ENCODE measurements at regions of chr1 and their contacts with region 1.

Region 1: GRCh38 chr1:39646232-39647081 is 7.0 kb upstream of the HEYL start:
- DNase-seq: peak; percentile 55
- H3K4me3 ChIP-seq: no peak overlapping the region
- H3K27me3 ChIP-seq: peaks cover 2% of the 10 kb centered on the region; the same call in 1 of the 2 replicates
- CTCF ChIP-seq: peak; percentile 23; the same call in 1 of the 2 replicates

Region 2: GRCh38 chr1:39044762-39045161 is 601.7 kb before region 1 on chr1:
- CTCF ChIA-PET with region 1: no interaction called
- POLR2A ChIA-PET with region 1: no interaction called
- DNase-seq: no peak
- H3K4me3 ChIP-seq: no peak overlapping the region
- H3K27me3 ChIP-seq: no peaks in the 10 kb centered on the region
- CTCF ChIP-seq: no peak

Region 3: DNA sequence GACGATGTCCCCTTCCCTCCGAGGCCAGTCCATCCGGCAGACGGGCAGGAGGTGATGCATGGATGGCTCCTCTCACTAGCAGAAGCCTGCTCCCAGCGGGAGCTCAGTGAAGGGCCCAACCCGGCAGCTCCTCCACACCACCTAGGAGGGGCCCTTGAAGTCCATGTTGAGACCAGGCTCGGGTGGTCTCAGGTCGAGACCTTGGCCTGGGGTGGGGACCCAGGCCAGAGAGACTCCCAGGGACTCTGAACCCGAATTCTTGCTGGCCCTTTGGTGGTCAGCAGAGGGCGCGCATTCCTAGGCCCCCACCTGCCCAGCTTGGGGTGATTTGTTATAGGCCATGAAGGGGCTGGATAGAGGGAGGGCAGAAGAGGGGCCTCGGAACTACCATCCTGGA is 26.1 kb after region 1 on chr1:
- CTCF ChIA-PET with region 1: interaction called, 137 read pairs
- POLR2A ChIA-PET with region 1: interaction called, 5 read pairs
- DNase-seq: no peak
- H3K4me3 ChIP-seq: no peak overlapping the region
- H3K27me3 ChIP-seq: peaks cover 46% of the 10 kb centered on the region
- CTCF ChIP-seq: peak; percentile 49

Measured in BJ (cell line).